ENCODE measurements at regions of chr3 and their contacts with region 1.

Region 1: DNA sequence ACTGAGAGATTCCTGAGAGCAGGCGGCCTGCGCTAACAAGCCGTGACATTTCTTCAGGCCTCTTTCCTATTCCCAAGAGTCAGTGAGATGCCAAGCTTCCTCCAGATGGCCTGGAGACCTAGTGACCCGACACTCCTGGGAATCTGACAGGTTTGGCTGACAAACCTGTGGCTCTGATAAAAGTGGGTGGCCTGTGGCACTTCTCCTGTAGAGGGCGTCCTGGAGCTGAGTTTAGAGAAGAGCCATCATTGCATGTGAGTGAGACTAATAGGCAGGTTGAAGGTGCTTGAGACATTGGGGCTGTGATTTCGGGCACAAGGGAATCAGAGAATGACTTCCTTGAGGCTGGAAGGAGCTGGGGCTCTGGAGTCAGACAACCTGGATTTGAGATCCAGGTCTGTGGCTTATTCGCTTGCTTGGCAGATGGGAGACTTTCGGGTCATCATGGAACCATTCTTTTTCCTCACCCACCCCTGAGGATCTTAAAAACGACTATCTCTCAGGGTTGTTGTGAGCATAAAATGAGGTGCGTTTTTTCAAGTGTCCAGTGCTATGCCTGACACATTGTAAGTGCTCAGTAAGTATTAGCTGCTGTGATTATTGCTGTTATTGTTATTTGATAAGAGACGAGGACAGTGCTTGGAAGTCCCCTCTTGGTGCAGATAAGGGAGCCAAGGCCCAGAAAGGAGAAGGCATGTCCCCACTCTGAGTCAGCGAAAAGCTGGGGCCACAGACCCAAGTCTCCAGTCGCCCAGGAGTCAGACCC is 77.2 kb downstream of the SCN10A start:
- DNase-seq: peak; percentile 91
- ATAC-seq: peak; percentile 93
- H3K4me3 Mint-ChIP-seq: no peak overlapping the region
- H3K27ac Mint-ChIP-seq: no peak overlapping the region
- H3K4me1 Mint-ChIP-seq: peaks cover 10% of the 10 kb centered on the region
- H3K27me3 Mint-ChIP-seq: peaks cover 2% of the 10 kb centered on the region; the same call in 1 of the 2 replicates
- CTCF ChIP-seq: peak; percentile 80

Region 2: GRCh38 chr3:38711331-38711730 is 27.5 kb before region 1 on chr3:
- CTCF ChIA-PET with region 1: no interaction called
- POLR2A ChIA-PET with region 1: no interaction called
- DNase-seq: no peak
- ATAC-seq: no peak
- H3K4me3 Mint-ChIP-seq: no peak overlapping the region
- H3K27ac Mint-ChIP-seq: no peak overlapping the region
- H3K4me1 Mint-ChIP-seq: no peaks in the 10 kb centered on the region
- H3K27me3 Mint-ChIP-seq: no peaks in the 10 kb centered on the region; the same call in 1 of the 2 replicates
- CTCF ChIP-seq: no peak

Region 3: GRCh38 chr3:38725726-38726419 is 12.9 kb before region 1 on chr3:
- CTCF ChIA-PET with region 1: interaction called, 15 read pairs
- POLR2A ChIA-PET with region 1: no interaction called
- DNase-seq: no peak
- ATAC-seq: no peak
- H3K4me3 Mint-ChIP-seq: no peak overlapping the region
- H3K27ac Mint-ChIP-seq: no peak overlapping the region
- H3K4me1 Mint-ChIP-seq: peaks cover 15% of the 10 kb centered on the region
- H3K27me3 Mint-ChIP-seq: no peaks in the 10 kb centered on the region
- CTCF ChIP-seq: no peak

Region 4: DNA sequence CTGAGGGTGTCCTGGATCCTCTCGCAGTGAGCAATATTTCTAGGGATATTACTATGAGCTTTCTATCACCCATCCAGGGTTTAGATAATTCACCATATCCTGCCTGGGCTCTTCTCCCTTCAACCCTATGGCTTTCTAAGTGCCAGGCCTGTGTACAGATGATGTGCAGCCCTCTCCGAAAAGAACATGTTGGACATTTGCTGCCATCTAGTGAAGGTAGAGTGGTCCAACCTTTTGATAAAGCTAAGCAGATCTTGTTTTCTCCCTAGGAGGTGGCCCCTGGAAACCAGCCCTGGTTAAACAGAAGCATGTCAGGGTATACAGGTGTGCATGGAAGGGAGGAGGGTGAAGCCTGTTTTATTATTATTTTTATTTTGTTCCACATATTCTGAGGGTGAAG is 105.1 kb after region 1 on chr3:
- CTCF ChIA-PET with region 1: interaction called, 31 read pairs
- POLR2A ChIA-PET with region 1: no interaction called
- DNase-seq: no peak
- ATAC-seq: peak; percentile 86
- H3K4me3 Mint-ChIP-seq: no peak overlapping the region
- H3K27ac Mint-ChIP-seq: no peak overlapping the region
- H3K4me1 Mint-ChIP-seq: no peaks in the 10 kb centered on the region
- H3K27me3 Mint-ChIP-seq: no peaks in the 10 kb centered on the region; the same call in 1 of the 2 replicates
- CTCF ChIP-seq: no peak

Measured in WTC11 (cell line).